ENCODE measurements at regions of chr1 and their contacts with region 1.

Region 1: DNA sequence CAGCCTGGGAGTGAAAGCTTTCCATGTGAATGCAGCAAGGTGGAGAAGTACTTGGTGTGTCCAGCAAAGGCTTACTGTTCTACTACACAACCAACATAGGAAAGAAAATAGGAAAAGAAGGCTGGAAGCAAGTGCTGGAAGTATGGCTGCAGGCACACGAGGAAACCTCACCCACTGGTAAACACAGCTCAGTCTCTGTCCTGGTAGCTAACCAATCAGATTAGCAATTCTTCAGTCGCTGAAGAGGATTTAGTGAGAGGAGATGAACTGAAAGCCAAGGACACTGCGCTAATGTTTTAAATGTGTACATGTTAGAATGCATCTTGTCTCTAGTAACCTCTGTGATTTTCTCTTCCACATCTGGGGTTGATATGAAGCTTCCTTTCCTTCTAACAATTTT is 36.2 kb upstream of the CACHD1 start:
- DNase-seq: no peak

Region 2: GRCh38 chr1:64417803-64418202 is 15.9 kb before region 1 on chr1:
- intact Hi-C with region 1: loop called (anchors 2 kb)
- DNase-seq: no peak

Region 3: GRCh38 chr1:64539781-64540218 is 106.1 kb after region 1 on chr1:
- intact Hi-C with region 1: no loop called
- DNase-seq: peak in 29 of 42 donors; percentile 4 to 69 (median 33)